Esophagus squamous epithelium (tissue), 5 donors: ENCODE measurements at regions of chr10 and their contacts with region 1.

Region 1: GRCh38 chr10:59617996-59618395 is 91.7 kb downstream of the SLC16A9 start:
- DNase-seq: no peak
- H3K4me3 ChIP-seq: no peak overlapping the region
- H3K27ac ChIP-seq: no peak overlapping the region
- H3K4me1 ChIP-seq: peaks cover 0 to 10% (median 0%) of the 10 kb centered on the region in 3 donors
- H3K27me3 ChIP-seq: no peaks in the 10 kb centered on the region
- CTCF ChIP-seq: no peak
- POLR2A ChIP-seq: no peak

Region 2: GRCh38 chr10:59234816-59235429 is 383.1 kb before region 1 on chr10:
- intact Hi-C with region 1: loop called (anchors 5 kb)
- DNase-seq: no peak
- H3K4me3 ChIP-seq: no peak overlapping the region
- H3K27ac ChIP-seq: no peak overlapping the region
- H3K4me1 ChIP-seq: no peaks in the 10 kb centered on the region
- H3K27me3 ChIP-seq: no peaks in the 10 kb centered on the region
- CTCF ChIP-seq: peak in 5 of 6 experiments; percentile 23 to 61 (median 42)
- POLR2A ChIP-seq: no peak

Region 3: GRCh38 chr10:59830601-59831259 is 212.7 kb after region 1 on chr10:
- intact Hi-C with region 1: no loop called
- DNase-seq: no peak
- H3K4me3 ChIP-seq: no peak overlapping the region
- H3K27ac ChIP-seq: peak overlapping the region in 1 of 4 donors; percentile 12
- H3K4me1 ChIP-seq: peaks cover 0 to 65% (median 7%) of the 10 kb centered on the region in 3 donors
- H3K27me3 ChIP-seq: no peaks in the 10 kb centered on the region
- CTCF ChIP-seq: peak; percentile 51 to 72 (median 56)
- POLR2A ChIP-seq: no peak